AG04449 (cell line): ENCODE measurements at regions of chr2 and their contacts with region 1.

Region 1: DNA sequence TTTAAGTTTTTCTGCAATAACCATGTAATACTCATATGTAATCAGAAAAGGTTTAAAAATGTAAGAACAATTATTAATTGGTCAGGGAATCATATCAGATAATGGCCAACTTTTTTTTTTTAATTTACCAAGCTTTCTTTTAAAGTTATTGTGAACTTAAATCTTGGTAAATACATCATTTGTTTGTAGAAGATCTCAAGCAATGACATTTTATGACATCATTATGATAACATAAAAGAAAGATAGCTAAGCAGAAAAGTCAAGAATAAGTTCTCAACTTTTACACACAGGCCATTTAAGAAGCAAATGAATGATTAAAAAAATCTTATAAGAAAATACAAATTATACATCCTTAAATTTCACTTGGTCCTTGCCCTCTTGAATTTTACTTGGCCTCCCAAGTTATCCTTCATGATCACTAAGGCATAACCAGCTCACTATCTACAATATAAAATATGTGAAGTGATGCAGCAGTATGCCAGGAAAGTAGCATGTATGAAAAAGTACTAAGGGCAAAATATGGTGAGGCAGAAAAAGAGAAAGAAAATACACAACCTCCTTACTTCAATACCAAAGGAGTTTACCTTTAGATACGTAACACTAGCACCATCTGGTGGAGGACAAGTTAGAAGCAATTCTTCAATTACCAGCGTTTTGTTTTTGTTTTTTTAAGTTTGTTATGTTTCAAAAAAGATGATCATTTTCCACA is 116.6 kb downstream of the SRBD1 start:
- DNase-seq: peak; percentile 31
- H3K4me3 ChIP-seq: no peak overlapping the region
- CTCF ChIP-seq: peak; percentile 49

Region 2: DNA sequence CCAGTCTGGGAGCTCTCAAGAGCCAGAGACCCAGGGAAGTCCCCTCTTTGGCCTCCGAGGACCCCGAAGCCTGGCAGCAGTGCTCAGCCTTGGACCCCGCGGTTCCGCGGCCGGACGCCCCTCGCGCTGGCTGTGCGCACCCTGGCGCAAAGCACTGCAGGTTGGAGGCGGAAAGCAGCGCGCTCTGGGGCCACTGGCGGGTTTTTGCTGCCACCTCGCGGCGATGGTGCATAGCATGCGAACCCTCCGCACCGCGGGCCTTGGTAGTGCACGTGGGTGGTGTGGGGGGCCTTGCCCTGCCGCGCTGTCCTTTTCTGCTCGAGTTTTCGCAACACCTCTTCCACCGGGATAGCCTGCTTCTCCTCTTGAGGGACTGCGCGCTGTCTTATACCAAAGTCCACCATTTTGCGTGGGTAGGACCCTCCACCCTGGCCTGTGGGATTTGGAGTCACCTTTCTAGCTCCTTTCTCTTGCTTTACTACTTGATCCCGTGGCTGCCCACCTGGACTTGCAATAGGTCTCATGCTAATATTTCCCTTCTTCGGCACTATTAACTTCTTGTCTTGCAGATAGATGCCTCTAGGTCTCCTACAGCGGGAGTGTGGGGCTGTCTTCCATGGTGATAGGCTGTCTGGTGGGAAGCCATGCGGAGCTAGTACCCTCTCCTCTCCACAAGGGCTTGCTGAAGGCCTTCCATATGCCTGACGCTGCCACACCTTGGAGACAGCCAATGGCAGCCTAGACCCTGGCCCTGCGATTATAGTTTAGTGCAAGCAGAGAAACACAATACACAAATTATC is 538.6 kb before region 1 on chr2:
- CTCF ChIA-PET with region 1: interaction called, 23 read pairs
- POLR2A ChIA-PET with region 1: no interaction called
- DNase-seq: no peak
- H3K4me3 ChIP-seq: no peak overlapping the region; the same call in 1 of the 2 replicates
- CTCF ChIP-seq: peak; percentile 93

Region 3: GRCh38 chr2:44974064-44974715 is 520.2 kb before region 1 on chr2:
- CTCF ChIA-PET with region 1: interaction called, 365 read pairs
- POLR2A ChIA-PET with region 1: no interaction called
- DNase-seq: no peak
- H3K4me3 ChIP-seq: no peak overlapping the region
- CTCF ChIP-seq: peak; percentile 11

Region 4: GRCh38 chr2:45067859-45068570 is 426.4 kb before region 1 on chr2:
- CTCF ChIA-PET with region 1: interaction called, 14 read pairs
- POLR2A ChIA-PET with region 1: no interaction called
- DNase-seq: no peak
- H3K4me3 ChIP-seq: no peak overlapping the region
- CTCF ChIP-seq: no peak

Region 5: DNA sequence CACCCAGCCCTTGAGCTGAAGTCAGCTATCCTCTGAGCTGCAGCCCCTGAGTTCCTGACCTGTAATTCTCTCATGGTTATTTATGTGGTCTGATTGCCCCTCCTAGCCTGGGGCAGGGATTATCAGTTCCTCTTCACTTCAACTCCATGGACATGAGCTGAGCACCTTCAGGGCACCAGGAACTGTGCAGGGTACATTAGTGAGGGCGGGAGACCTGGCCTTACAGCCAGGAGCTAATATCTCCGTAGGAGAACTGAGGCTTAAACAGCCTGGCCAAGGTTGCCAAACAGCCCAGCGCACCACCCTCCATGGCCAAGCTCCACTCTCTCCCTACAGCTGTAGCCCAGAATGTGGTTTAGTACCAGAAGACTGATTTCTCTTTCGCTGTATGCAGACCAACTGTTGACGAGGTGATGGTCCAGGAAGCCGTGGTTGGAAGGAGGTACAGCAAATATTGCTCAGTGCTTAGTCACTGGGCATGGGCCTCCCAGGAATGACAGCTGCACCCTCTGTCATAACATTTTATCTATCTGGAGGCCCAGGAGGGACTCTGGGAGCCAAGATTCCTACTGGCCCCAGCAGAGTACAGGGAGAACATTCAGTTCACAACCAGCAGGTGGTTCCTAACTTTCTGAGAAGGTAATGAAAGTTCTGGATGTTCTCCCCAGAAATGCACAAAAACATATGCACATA is 256.4 kb before region 1 on chr2:
- CTCF ChIA-PET with region 1: interaction called, 17 read pairs
- POLR2A ChIA-PET with region 1: no interaction called
- DNase-seq: peak; percentile 86
- H3K4me3 ChIP-seq: no peak overlapping the region
- CTCF ChIP-seq: peak; percentile 39

Region 6: DNA sequence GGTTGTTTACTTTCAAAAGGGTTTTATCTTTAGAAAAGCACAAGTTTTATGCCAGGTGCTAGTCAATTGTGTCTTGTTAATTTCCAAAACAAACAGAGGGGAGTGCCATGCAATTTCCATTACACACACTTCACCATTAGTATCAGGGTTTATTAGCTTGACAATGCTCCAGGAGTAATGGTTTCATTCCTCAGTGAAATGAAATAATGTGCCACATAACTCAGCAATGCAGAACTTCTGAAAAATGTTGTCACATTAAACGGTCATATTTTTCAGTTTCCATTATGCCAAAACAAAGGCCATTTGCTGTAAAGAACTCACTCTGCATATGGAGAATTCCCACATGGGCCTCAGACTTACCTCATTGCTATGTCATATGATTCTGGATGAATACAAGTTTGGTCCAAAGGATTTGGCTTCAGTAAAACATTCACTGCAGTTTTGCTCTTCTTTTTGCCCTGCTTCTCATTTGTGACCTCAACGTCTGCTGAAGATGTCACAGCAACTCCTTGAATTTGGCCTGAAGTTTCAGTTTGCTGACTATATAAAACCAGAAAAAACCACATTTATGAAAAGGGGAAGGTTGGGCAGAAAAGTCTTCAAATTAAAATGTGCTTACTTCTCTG is 81.6 kb before region 1 on chr2:
- CTCF ChIA-PET with region 1: no interaction called
- POLR2A ChIA-PET with region 1: no interaction called
- DNase-seq: no peak
- H3K4me3 ChIP-seq: no peak overlapping the region
- CTCF ChIP-seq: no peak

Region 7: GRCh38 chr2:45483997-45484396 is 10.4 kb before region 1 on chr2:
- CTCF ChIA-PET with region 1: interaction called, 32 read pairs
- POLR2A ChIA-PET with region 1: no interaction called
- DNase-seq: no peak
- H3K4me3 ChIP-seq: no peak overlapping the region
- CTCF ChIP-seq: peak; percentile 15

Region 8: DNA sequence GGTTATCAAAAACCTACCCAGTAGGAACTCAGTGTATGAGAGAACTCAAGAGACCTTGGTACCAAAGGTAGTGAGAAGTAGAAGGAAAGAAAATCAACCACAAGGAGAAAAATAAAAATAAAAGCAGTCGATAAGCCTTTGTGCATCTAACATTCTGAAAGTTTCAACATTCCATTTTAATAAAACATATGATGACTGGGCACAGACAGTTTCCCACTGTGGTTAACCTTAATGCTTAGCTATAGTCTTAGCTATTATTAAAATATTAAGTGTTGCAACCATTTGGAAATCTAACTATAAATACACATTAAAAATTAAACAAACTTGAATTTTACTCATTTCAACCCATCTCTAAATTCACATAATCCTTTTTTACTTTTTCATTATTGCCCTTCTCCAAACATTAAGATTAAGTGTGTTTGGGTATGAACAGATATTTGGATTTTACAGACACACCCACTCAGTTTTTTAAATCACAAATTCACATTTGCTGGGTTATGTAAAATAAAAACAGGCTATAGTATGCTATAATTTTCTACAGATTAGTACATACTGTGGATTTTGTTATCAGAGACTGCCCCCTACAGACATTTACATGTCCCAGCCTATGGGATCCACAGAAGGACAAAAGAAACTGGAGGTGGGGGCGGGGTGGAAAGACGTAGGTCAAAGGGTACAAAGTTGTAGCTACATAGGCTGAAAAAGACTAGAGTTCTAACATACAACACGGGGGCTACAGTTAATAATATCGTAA is 83.8 kb after region 1 on chr2:
- CTCF ChIA-PET with region 1: interaction called, 17 read pairs
- POLR2A ChIA-PET with region 1: no interaction called
- DNase-seq: no peak
- H3K4me3 ChIP-seq: no peak overlapping the region
- CTCF ChIP-seq: peak; percentile 29